ENCODE measurements at regions of chr20 and their contacts with region 1.

Region 1: GRCh38 chr20:35601008-35601973 is 14.3 kb upstream of the SPAG4 start:
- DNase-seq: peak; percentile 91
- ATAC-seq: peak; percentile 94
- H3K4me3 Mint-ChIP-seq: peak overlapping the region; percentile 58
- H3K27ac Mint-ChIP-seq: peak overlapping the region; percentile 49
- H3K4me1 Mint-ChIP-seq: peaks cover 5% of the 10 kb centered on the region
- H3K27me3 Mint-ChIP-seq: peaks cover 23% of the 10 kb centered on the region

Region 2: GRCh38 chr20:35146920-35147574 is 454.2 kb before region 1 on chr20 and contains the start of gene EDEM2:
- CTCF ChIA-PET with region 1: no interaction called
- POLR2A ChIA-PET with region 1: no interaction called
- intact Hi-C with region 1: no loop called
- DNase-seq: peak; percentile 97
- ATAC-seq: peak; percentile 92
- H3K4me3 Mint-ChIP-seq: peak within 1 kb of the TSS; percentile 97
- H3K27ac Mint-ChIP-seq: peak within 1 kb of the TSS; percentile 95
- H3K4me1 Mint-ChIP-seq: peaks cover 29% of the 10 kb centered on the region
- H3K27me3 Mint-ChIP-seq: no peaks in the 10 kb centered on the region
- total RNA-seq, gene EDEM2: 16.5 to 18.2 TPM

Region 3: GRCh38 chr20:35463455-35464300 is 137.6 kb before region 1 on chr20:
- CTCF ChIA-PET with region 1: interaction called, 4 read pairs
- POLR2A ChIA-PET with region 1: no interaction called
- intact Hi-C with region 1: loop called in 1 of 2 experiments (anchors 5 kb)
- DNase-seq: peak; percentile 67
- ATAC-seq: peak; percentile 90
- H3K4me3 Mint-ChIP-seq: no peak overlapping the region
- H3K27ac Mint-ChIP-seq: no peak overlapping the region
- H3K4me1 Mint-ChIP-seq: no peaks in the 10 kb centered on the region
- H3K27me3 Mint-ChIP-seq: no peaks in the 10 kb centered on the region

Region 4: DNA sequence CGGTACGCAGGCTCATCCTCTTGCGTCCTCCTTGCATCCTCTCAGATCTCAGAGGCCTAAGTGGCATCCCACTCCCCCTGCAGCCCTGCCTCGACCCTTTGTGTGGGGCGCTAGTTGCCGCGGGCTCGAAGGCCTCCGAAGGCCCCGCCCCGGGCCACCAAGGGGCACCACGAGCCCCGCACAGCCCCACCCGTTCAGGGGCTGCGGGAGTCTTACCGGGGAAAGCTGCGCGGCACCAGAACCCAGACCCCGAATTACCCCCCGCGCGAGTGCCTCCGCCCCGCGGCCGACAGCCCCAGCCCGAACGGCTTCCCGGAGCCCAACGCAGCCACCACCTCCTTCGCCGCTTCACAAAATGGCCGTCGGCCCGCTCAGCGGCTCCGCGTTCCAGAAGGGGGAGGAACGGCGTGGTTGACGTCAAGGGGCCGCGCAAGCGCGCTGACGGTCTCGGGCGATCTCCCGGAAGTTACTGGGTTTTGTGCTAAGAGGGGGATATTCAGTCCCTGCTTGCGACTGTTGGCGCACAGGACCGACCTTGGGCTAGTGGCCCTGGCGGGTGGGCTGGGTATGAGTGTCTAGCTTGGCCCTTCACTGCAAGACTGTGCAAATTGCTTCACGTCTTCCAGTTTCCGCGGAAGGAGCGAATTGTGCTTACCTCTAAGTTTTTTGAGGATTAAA is 63.4 kb after region 1 on chr20 and contains the starts of genes CPNE1 and RBM12:
- CTCF ChIA-PET with region 1: interaction called, 4 read pairs
- POLR2A ChIA-PET with region 1: interaction called, 3 read pairs
- intact Hi-C with region 1: loop called in 1 of 2 experiments (anchors 5 kb)
- DNase-seq: peak; percentile 96
- ATAC-seq: peak; percentile 68
- H3K4me3 Mint-ChIP-seq: peak within 1 kb of the TSS; percentile 80
- H3K27ac Mint-ChIP-seq: peak within 1 kb of the TSS; percentile 100
- H3K4me1 Mint-ChIP-seq: peaks cover 36% of the 10 kb centered on the region
- H3K27me3 Mint-ChIP-seq: no peaks in the 10 kb centered on the region
- total RNA-seq, gene CPNE1: 249 to 258 TPM
- total RNA-seq, gene RBM12: 122 to 148 TPM

Region 5: GRCh38 chr20:35726759-35727711 is 125.7 kb after region 1 on chr20:
- CTCF ChIA-PET with region 1: no interaction called
- POLR2A ChIA-PET with region 1: interaction called, 10 read pairs
- intact Hi-C with region 1: no loop called
- DNase-seq: no peak
- ATAC-seq: no peak
- H3K4me3 Mint-ChIP-seq: no peak overlapping the region
- H3K27ac Mint-ChIP-seq: no peak overlapping the region
- H3K4me1 Mint-ChIP-seq: peaks cover 39% of the 10 kb centered on the region
- H3K27me3 Mint-ChIP-seq: no peaks in the 10 kb centered on the region

Region 6: DNA sequence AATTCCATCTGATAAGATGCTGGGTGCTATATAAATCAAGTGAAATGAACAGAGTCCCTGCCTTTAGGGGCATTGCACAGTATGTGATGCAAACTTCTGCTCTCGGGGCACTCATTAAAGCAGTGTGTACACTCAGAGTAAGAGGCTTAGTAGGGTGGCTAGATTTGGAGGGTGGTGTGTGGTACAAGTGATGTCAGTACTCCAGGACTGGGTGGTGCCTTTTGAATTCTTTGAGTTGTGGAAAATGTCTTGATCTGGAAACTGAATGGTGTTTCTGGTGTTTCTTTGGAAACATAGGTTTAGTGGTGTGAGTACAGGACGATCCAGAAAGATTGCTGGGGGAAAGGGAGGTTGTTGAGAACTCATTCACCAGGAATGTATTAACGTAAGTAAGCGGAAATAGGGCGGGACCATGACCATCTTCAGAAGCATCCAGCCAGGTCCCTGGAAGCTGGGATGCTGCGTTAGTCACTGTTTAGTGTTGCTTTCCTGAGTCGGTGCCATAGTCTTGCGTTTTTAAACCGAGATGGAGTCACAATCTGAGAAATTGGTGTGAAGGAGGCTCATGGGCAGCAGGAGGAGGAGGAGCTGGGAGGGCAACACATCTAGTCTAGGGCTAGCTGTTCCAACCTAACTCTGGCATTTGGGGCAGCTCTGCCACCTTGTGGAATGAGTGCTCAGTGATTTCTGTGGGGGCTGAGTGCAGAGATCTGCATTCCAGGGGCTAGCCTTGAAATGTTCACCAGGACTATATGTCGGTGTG is 282.7 kb after region 1 on chr20:
- CTCF ChIA-PET with region 1: interaction called, 5 read pairs
- POLR2A ChIA-PET with region 1: no interaction called
- intact Hi-C with region 1: loop called in 1 of 2 experiments (anchors 1 kb)
- DNase-seq: peak; percentile 76
- ATAC-seq: peak; percentile 93
- H3K4me3 Mint-ChIP-seq: no peak overlapping the region
- H3K27ac Mint-ChIP-seq: peak overlapping the region; percentile 66
- H3K4me1 Mint-ChIP-seq: peaks cover 12% of the 10 kb centered on the region
- H3K27me3 Mint-ChIP-seq: no peaks in the 10 kb centered on the region

Region 7: GRCh38 chr20:36519944-36520343 is 918.7 kb after region 1 on chr20:
- CTCF ChIA-PET with region 1: no interaction called
- POLR2A ChIA-PET with region 1: no interaction called
- intact Hi-C with region 1: no loop called
- DNase-seq: no peak
- ATAC-seq: peak; percentile 55
- H3K4me3 Mint-ChIP-seq: no peak overlapping the region
- H3K27ac Mint-ChIP-seq: peak overlapping the region; percentile 76
- H3K4me1 Mint-ChIP-seq: peaks cover 14% of the 10 kb centered on the region
- H3K27me3 Mint-ChIP-seq: no peaks in the 10 kb centered on the region